A673 (cell line): ENCODE measurements at regions of chr14 and their contacts with region 1.

Region 1: DNA sequence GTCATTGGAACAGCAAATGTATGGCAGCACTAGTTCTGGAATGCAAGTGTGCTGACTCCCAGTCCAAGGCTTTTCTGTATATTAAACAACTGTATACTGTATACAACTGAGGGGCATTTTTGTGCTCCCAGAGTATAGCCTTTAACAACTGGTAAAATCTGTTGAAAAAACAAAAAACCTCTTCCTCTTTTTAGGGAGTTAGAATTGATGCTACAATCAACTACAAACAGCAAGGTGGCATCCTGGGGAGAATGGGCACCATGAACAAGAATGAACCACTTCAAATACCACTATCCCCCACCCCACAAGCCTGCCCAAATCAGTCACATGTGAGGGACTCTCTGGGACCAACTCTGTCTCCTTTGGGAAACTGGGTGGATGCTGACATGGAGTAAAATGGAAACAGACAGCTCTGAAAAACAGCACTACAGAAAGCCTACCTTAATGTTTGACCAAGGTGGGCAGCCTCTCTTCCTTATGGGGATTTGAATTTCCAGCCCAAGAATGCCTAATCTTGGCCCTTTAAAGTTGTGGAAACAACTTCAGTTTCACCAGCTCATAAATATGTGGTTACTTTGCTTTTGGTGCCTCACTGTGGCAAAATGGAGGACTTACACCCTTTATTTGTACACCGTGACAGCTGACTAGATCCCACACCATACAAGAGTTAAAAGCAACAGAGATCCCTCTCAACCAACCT is 7.5 kb downstream of the VTI1B start:
- DNase-seq: peak; percentile 74
- H3K4me3 ChIP-seq: no peak overlapping the region
- H3K27ac ChIP-seq: no peak overlapping the region
- H3K4me1 ChIP-seq: no peaks in the 10 kb centered on the region
- H3K27me3 ChIP-seq: no peaks in the 10 kb centered on the region
- CTCF ChIP-seq: peak; percentile 73

Region 2: DNA sequence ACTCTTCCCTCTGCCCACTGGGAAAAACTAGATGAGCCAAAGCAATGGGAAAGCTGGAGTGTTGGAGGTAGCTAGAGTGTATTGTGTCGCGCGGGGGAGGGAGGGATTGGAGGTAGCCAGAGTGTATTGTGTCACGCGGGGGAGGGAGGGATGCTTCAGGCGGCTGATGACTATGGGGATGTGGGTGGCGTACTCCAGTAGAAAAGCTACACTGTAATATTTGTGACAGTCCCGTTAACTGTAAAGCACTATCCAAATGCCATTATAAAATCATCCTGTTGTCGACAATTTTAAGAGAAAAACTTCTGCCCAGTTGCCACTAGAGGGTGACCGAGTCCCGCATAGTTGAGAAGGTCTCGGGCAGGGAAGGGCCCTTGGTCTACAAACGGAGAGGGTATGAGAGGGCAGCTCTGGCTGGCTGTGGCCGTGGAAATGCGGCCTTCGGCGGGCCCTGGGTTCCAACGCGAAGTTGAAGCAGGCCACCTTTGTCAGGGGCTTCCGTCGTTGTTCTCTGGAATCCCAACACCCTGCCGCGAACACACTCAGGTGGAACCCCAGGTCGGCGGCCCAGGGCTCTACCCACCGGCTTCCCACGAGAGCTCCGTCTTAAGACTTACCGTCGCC is 239.8 kb before region 1 on chr14:
- CTCF ChIA-PET with region 1: interaction called, 11 read pairs
- POLR2A ChIA-PET with region 1: no interaction called
- intact Hi-C with region 1: loop called (anchors 1 kb)
- DNase-seq: peak; percentile 87
- H3K4me3 ChIP-seq: no peak overlapping the region
- H3K27ac ChIP-seq: no peak overlapping the region
- H3K4me1 ChIP-seq: no peaks in the 10 kb centered on the region
- H3K27me3 ChIP-seq: no peaks in the 10 kb centered on the region
- CTCF ChIP-seq: peak; percentile 81

Region 3: GRCh38 chr14:67583711-67584644 is 82.9 kb before region 1 on chr14:
- CTCF ChIA-PET with region 1: interaction called, 11 read pairs
- POLR2A ChIA-PET with region 1: no interaction called
- intact Hi-C with region 1: loop called (anchors 1 kb)
- DNase-seq: peak; percentile 41
- H3K4me3 ChIP-seq: no peak overlapping the region
- H3K27ac ChIP-seq: no peak overlapping the region
- H3K4me1 ChIP-seq: no peaks in the 10 kb centered on the region
- H3K27me3 ChIP-seq: no peaks in the 10 kb centered on the region
- CTCF ChIP-seq: peak; percentile 68

Region 4: DNA sequence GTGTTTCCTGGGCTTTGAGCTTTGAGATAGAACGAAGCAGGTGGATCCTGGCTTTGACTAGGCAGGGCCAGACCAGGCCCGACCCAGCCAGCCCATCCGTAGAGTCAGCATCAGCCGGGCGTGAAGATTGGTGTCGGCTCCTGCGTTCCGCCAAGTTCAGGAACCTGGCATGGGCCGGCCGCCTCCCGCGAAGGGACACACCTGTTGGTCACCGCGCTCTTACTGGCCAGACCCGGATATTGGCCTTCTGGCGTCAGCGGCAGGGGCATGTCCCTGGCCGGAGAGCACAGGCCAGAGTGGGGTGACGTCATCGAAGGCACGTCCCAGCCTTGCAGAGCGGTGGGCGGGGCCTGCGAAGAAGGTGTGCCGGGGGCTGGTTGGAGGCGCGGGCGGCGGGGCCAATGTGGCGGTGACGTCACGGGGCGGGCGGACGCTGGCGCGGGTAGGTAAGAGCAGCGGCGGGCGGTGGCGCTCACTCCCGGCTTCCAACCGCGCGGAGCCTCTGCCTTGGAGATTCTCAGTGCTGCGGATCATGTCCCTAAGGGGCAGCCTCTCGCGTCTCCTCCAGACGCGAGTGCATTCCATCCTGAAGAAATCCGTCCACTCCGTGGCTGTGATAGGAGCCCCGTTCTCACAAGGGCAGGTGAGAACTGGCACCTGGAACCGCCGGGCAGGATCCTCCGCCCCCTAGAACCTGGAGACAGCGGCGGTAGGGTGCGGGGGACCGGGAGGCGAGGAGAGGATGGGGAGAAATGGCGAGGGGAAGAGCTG is 47.3 kb before region 1 on chr14 and contains the start of gene ARG2:
- CTCF ChIA-PET with region 1: interaction called, 17 read pairs
- POLR2A ChIA-PET with region 1: interaction called, 4 read pairs
- intact Hi-C with region 1: loop called (anchors 2 kb)
- DNase-seq: peak; percentile 95
- H3K4me3 ChIP-seq: peak within 1 kb of the TSS; percentile 69
- H3K27ac ChIP-seq: peak within 1 kb of the TSS; percentile 30
- H3K4me1 ChIP-seq: peaks cover 31% of the 10 kb centered on the region
- H3K27me3 ChIP-seq: no peaks in the 10 kb centered on the region
- CTCF ChIP-seq: no peak; the same call in 1 of the 2 replicates
- total RNA-seq, gene ARG2: 32.1 and 35.6 TPM in 2 replicates